ENCODE measurements at regions of chr19 and their contacts with region 1.

Region 1: GRCh38 chr19:38729653-38730469 is 14.4 kb downstream of the CAPN12 start:
- DNase-seq: peak; percentile 57
- ATAC-seq: peak; percentile 72
- H3K4me3 ChIP-seq: no peak overlapping the region
- H3K27ac ChIP-seq: no peak overlapping the region
- H3K4me1 ChIP-seq: peaks cover 16% of the 10 kb centered on the region
- H3K27me3 ChIP-seq: no peaks in the 10 kb centered on the region
- CTCF ChIP-seq: peak; percentile 96
- EP300 ChIP-seq: no peak
- POLR2A ChIP-seq: 0 out of 4 replicates have a peak, but pooled peaks of 1 of the 2 experiments have one; percentile 26
- RAD21 ChIP-seq: peak; percentile 82

Region 2: DNA sequence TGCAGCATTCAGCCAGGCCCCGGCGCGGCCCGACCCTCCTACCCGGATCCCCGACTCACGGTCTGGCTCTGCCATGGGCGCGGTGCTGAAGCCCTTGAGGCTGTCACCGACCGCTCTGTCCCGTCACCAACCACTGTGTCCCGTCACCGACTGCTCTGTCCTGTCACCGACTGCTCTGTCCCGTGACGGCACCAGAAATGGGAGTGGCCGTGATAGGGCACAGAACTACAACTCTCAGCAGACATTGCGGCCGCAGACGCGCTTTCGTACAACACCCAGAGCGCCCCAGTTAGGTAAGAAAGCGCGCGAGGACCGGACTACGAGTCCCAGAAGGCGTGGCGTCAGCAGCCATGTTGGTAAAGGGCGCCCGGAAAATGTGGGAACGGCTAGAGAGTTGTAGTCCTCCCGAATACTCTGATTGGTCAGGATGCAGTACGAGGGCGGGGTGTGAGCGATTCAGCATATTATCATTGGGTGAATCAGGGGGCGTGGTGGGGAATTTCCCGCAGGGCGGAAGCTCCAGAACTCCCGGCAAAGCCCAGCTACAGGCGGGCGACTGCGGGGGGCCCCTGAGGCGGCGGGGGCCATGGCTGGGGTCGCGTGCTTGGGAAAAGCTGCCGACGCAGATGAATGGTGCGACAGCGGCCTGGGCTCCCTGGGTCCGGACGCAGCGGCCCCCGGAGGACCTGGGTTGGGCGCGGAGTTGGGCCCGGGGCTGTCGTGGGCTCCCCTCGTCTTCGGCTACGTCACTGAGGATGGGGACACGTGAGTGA is 169.8 kb after region 1 on chr19 and contains the starts of genes NFKBIB and SIRT2:
- CTCF ChIA-PET with region 1: no interaction called
- POLR2A ChIA-PET with region 1: no interaction called
- in situ Hi-C with region 1: loop called (anchors 25 kb)
- intact Hi-C with region 1: no loop called
- DNase-seq: peak; percentile 99
- ATAC-seq: peak; percentile 95
- H3K4me3 ChIP-seq: peak within 1 kb of the TSS; percentile 73 to 87 (median 83)
- H3K27ac ChIP-seq: peak within 1 kb of the TSS; percentile 73
- H3K4me1 ChIP-seq: peaks cover 34% of the 10 kb centered on the region
- H3K27me3 ChIP-seq: no peaks in the 10 kb centered on the region; a peak in 1 of 5 replicates
- CTCF ChIP-seq: peak; percentile 42
- EP300 ChIP-seq: peak in 1 of 2 experiments; percentile 4; a peak in 1 of 4 replicates
- POLR2A ChIP-seq: peak in 1 of 2 experiments; percentile 59; a peak in 2 of 4 replicates
- RAD21 ChIP-seq: peak; percentile 15; the same call in 1 of the 2 replicates
- total RNA-seq, gene NFKBIB: 13.8 and 14.9 TPM in 2 replicates
- total RNA-seq, gene SIRT2: 20.3 and 22.3 TPM in 2 replicates